ENCODE measurements at regions of chr17 and their contacts with region 1.

Region 1: DNA sequence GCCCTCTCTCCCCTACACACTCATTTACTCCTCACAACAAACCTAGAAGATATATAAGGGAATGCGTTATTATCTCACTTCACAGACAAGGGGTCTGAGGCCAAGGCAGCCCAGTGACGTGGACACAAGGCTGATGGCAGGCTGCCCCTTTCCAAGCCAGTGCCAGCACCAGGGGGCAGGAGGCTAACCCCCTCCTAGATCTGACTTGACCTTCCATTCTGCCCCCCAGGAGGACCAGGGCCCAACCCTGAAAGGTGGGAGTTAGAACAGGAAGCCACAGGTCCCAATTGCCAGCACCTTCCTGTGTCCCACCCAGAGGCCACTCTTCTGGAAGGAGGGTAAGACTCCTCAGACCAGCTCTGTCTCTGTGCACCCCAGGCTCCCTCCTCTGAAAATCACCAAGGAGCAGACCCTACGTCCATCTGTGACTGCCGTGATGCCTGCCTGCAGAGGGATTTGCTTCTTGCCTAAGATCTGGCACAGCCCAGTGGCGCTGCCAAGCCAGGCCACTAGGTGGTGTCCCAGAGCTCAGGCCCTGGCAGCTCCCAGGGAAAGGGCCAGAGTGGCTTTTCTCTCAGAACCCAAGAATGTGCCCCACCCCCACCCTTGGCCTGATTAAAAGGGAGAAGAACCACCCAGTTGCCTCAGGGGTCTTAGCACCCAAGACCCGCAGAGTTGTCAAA is 42.4 kb upstream of the MRPS23 start:
- DNase-seq: peak; percentile 86
- H3K4me3 Mint-ChIP-seq: no peak overlapping the region
- H3K27ac Mint-ChIP-seq: no peak overlapping the region
- H3K4me1 Mint-ChIP-seq: no peaks in the 10 kb centered on the region
- H3K27me3 Mint-ChIP-seq: peaks cover 2% of the 10 kb centered on the region

Region 2: GRCh38 chr17:57861000-57861789 is 31.1 kb before region 1 on chr17:
- CTCF ChIA-PET with region 1: interaction called, 10 read pairs
- POLR2A ChIA-PET with region 1: no interaction called
- intact Hi-C with region 1: no loop called
- DNase-seq: peak; percentile 46
- H3K4me3 Mint-ChIP-seq: peak overlapping the region; percentile 71
- H3K27ac Mint-ChIP-seq: no peak overlapping the region
- H3K4me1 Mint-ChIP-seq: peaks cover 13% of the 10 kb centered on the region
- H3K27me3 Mint-ChIP-seq: peaks cover 10% of the 10 kb centered on the region

Region 3: DNA sequence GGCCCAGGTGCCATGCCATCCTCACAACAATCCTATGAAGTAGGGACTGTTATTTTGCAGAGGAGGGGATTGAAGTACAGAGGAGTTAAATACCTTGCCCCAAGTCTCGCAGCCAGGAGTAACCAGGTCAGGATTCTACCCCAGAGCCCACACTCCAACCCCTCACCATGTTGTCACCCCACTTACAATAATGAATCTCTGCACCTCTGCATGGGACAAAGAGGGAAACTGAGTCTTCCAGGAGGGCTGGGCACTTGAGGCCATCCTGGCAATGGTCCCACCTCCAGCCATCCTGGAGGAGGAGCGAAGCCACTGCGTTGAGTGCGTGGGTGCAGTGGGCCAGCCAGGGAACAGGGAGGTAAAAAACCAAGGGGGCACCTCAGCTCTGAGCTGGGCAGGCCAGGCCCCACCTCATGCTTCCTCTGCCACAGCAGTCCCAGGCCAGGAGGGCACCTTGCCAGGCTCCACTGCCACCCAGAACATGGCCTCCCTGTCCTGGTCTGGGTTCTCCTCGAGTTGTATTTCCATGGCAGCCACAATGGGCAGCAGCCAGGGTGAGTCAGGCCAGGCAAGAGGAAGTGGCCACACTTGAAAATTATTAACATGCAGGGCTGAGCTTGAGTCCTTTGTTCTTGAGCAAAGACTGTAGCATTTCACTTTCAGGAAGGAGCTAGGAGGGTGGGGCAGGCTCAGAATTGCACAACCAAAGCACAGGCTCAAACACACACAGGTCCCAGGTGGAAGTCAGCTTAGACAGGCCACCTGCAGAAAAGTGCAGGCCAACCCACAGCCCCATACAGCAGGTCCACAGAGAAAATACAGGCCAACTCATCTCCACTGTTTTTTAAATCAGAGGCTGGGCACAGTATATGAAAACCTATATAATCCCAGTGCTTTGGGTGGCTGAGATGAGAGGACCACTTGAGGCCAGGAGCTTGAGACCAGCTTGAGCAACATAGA is 10.8 kb after region 1 on chr17:
- CTCF ChIA-PET with region 1: interaction called, 12 read pairs
- POLR2A ChIA-PET with region 1: no interaction called
- intact Hi-C with region 1: no loop called
- DNase-seq: no peak
- H3K4me3 Mint-ChIP-seq: no peak overlapping the region
- H3K27ac Mint-ChIP-seq: no peak overlapping the region
- H3K4me1 Mint-ChIP-seq: peaks cover 6% of the 10 kb centered on the region
- H3K27me3 Mint-ChIP-seq: no peaks in the 10 kb centered on the region

Region 4: GRCh38 chr17:57982452-57983170 is 90.3 kb after region 1 on chr17:
- CTCF ChIA-PET with region 1: interaction called, 14 read pairs
- POLR2A ChIA-PET with region 1: no interaction called
- intact Hi-C with region 1: no loop called
- DNase-seq: no peak
- H3K4me3 Mint-ChIP-seq: no peak overlapping the region
- H3K27ac Mint-ChIP-seq: no peak overlapping the region
- H3K4me1 Mint-ChIP-seq: peaks cover 56% of the 10 kb centered on the region
- H3K27me3 Mint-ChIP-seq: no peaks in the 10 kb centered on the region

Region 5: GRCh38 chr17:57995076-57995956 is 103.0 kb after region 1 on chr17:
- CTCF ChIA-PET with region 1: interaction called, 26 read pairs
- POLR2A ChIA-PET with region 1: no interaction called
- intact Hi-C with region 1: loop called (anchors 1 kb)
- DNase-seq: peak; percentile 76
- H3K4me3 Mint-ChIP-seq: no peak overlapping the region
- H3K27ac Mint-ChIP-seq: peak overlapping the region; percentile 47
- H3K4me1 Mint-ChIP-seq: peaks cover 69% of the 10 kb centered on the region
- H3K27me3 Mint-ChIP-seq: no peaks in the 10 kb centered on the region